ENCODE measurements at regions of chr11 and their contacts with region 1.

Region 1: DNA sequence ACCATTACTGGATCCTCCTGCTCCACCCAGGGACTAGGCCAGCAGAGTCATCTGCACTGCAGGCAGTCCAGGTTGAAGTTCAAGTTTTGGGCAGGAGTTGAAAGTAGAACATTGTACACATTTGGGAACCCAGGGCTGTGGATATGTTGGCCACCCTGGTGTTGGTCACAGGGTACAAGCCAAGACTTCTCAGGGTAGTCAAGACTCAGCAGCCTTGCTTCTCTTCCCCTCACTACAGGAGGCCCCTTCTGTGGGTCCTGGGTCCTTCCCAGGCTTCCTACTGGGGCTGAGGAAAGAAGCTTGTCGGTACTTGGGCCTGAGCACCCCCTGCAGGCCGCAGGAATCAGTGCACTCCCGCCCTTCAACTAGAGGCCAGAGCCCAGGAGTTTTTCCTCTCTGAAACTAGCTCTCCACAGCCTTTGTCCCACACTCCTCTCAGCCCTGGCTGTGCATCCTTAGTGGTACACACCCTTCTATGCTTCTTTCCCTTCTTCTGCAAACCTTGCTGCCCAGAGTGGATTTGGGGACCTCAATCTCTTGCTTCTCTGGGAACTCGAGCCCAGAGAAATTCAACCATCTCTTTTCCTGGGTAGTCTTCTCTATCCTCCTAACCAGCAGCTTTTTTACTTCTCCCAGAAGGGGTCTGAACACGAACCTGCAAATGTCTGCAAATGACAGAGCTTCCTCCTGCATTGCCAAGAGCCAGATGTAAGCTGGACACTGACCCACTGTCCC is 2.6 kb upstream of the HPX start:
- DNase-seq: peak; percentile 74
- ATAC-seq: peak; percentile 86
- H3K4me3 Mint-ChIP-seq: no peak overlapping the region
- H3K27ac Mint-ChIP-seq: no peak overlapping the region
- H3K4me1 Mint-ChIP-seq: no peaks in the 10 kb centered on the region
- H3K27me3 Mint-ChIP-seq: no peaks in the 10 kb centered on the region

Region 2: DNA sequence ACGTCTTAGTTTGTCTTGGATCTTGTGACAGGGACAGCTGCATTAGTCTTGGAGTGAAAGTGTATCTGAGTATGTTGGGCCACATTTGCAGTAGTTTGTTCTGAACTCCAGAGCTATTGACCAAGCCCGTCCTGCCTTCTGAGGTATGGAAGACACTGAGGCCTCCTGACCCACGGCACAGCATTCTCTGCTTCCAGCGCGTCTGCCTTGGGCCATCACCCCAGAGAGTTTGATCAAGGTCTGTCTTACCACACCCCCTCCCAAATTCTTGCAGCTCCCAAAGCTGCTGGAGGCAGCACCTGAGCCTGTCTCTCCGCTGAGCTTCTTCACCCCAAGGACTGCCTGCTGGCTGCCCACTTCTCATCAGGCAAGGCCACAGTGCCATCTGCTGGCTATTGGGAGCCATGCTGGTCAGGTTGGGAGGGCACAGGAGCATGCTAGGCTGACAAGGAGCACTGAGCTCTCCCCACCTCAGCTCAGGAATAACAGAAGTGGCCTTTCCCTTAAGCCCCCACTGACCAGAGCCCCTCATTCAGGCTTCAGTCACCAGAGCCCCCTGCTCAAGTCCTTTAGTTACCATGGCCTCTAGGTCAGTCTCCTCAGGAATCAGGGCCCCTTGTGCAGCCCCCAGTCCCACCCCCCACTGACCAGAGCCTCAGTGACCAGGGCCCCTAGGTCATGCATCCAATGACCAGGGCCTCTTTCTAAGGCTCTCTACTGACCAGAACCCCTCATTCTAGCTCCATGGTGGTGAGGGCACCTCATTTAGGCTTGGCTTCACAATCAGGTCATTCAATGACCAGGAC is 80.4 kb before region 1 on chr11:
- CTCF ChIA-PET with region 1: interaction called, 16 read pairs
- POLR2A ChIA-PET with region 1: no interaction called
- intact Hi-C with region 1: no loop called
- DNase-seq: peak; percentile 86
- ATAC-seq: peak; percentile 97
- H3K4me3 Mint-ChIP-seq: no peak overlapping the region
- H3K27ac Mint-ChIP-seq: no peak overlapping the region
- H3K4me1 Mint-ChIP-seq: no peaks in the 10 kb centered on the region
- H3K27me3 Mint-ChIP-seq: no peaks in the 10 kb centered on the region

Region 3: GRCh38 chr11:6419009-6419631 is 24.3 kb before region 1 on chr11 and contains the start of gene APBB1:
- CTCF ChIA-PET with region 1: interaction called, 11 read pairs
- POLR2A ChIA-PET with region 1: no interaction called
- intact Hi-C with region 1: no loop called
- DNase-seq: peak; percentile 86
- ATAC-seq: peak; percentile 54
- H3K4me3 Mint-ChIP-seq: peak within 1 kb of the TSS; percentile 72
- H3K27ac Mint-ChIP-seq: peak within 1 kb of the TSS; percentile 73
- H3K4me1 Mint-ChIP-seq: peaks cover 7% of the 10 kb centered on the region
- H3K27me3 Mint-ChIP-seq: peaks cover 6% of the 10 kb centered on the region
- total RNA-seq, gene APBB1: 43.2 to 49.8 TPM

Region 4: DNA sequence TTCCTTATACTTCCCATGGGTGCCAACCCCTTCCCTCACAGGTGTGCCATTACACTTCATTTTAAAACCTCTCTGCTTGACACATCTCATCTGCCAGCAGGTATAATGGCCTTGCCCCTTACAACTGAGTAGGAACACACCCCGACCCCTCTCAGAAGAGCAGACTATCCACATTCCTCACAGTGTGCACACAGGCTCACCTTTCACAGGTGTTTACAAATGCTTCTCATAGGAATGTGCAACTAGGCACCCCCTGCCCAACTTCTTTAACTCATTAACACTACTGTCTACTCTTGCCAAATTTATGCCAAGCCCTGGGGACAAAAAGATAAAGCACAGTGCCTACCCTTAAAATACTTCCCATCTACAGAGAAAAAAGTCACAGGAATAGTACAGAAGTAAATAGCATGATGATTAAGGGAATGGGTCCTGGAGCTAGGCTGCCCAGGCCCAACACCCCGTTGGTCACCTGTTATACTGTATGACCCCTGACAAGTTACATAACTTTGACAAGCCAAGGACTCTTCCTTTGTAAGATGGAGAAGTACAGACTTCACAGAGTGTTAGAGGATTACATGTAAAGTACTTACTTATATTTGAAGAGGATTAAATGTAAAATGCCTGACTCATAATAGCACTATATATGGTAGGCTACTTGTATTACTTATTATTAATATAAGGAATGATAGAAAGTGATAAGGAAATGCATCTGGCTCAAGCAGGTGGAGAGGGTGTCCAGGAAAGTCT is 15.1 kb after region 1 on chr11:
- CTCF ChIA-PET with region 1: interaction called, 18 read pairs
- POLR2A ChIA-PET with region 1: no interaction called
- intact Hi-C with region 1: no loop called
- DNase-seq: no peak
- ATAC-seq: no peak
- H3K4me3 Mint-ChIP-seq: no peak overlapping the region
- H3K27ac Mint-ChIP-seq: no peak overlapping the region
- H3K4me1 Mint-ChIP-seq: no peaks in the 10 kb centered on the region
- H3K27me3 Mint-ChIP-seq: no peaks in the 10 kb centered on the region

Region 5: GRCh38 chr11:6576471-6577373 is 133.3 kb after region 1 on chr11:
- CTCF ChIA-PET with region 1: no interaction called
- POLR2A ChIA-PET with region 1: no interaction called
- intact Hi-C with region 1: no loop called
- DNase-seq: no peak
- ATAC-seq: no peak
- H3K4me3 Mint-ChIP-seq: no peak overlapping the region
- H3K27ac Mint-ChIP-seq: no peak overlapping the region
- H3K4me1 Mint-ChIP-seq: peaks cover 7% of the 10 kb centered on the region
- H3K27me3 Mint-ChIP-seq: no peaks in the 10 kb centered on the region

Region 6: GRCh38 chr11:6677018-6677417 is 233.6 kb after region 1 on chr11:
- CTCF ChIA-PET with region 1: no interaction called
- POLR2A ChIA-PET with region 1: no interaction called
- intact Hi-C with region 1: no loop called
- DNase-seq: no peak
- ATAC-seq: peak; percentile 41
- H3K4me3 Mint-ChIP-seq: no peak overlapping the region
- H3K27ac Mint-ChIP-seq: no peak overlapping the region
- H3K4me1 Mint-ChIP-seq: peaks cover 44% of the 10 kb centered on the region
- H3K27me3 Mint-ChIP-seq: no peaks in the 10 kb centered on the region

Region 7: GRCh38 chr11:6705905-6706535 is 262.6 kb after region 1 on chr11:
- CTCF ChIA-PET with region 1: interaction called, 3 read pairs
- POLR2A ChIA-PET with region 1: no interaction called
- intact Hi-C with region 1: loop called in 1 of 2 experiments (anchors 2 kb)
- DNase-seq: peak; percentile 59
- ATAC-seq: peak; percentile 75
- H3K4me3 Mint-ChIP-seq: no peak overlapping the region
- H3K27ac Mint-ChIP-seq: peak overlapping the region; percentile 23
- H3K4me1 Mint-ChIP-seq: peaks cover 18% of the 10 kb centered on the region
- H3K27me3 Mint-ChIP-seq: no peaks in the 10 kb centered on the region